Activated CD4-positive, alpha-beta memory T cell treated with anti-CD3 and anti-CD28 coated beads for 36 hours (primary cell): ENCODE measurements at regions of chr3 and their contacts with region 1.

Region 1: GRCh38 chr3:9503283-9503682 is 50.3 kb downstream of the LHFPL4 start:
- DNase-seq: peak; percentile 83
- H3K4me3 Mint-ChIP-seq: no peak overlapping the region
- H3K27ac Mint-ChIP-seq: no peak overlapping the region
- H3K4me1 Mint-ChIP-seq: peaks cover 7% of the 10 kb centered on the region
- H3K27me3 Mint-ChIP-seq: peaks cover 31% of the 10 kb centered on the region

Region 2: DNA sequence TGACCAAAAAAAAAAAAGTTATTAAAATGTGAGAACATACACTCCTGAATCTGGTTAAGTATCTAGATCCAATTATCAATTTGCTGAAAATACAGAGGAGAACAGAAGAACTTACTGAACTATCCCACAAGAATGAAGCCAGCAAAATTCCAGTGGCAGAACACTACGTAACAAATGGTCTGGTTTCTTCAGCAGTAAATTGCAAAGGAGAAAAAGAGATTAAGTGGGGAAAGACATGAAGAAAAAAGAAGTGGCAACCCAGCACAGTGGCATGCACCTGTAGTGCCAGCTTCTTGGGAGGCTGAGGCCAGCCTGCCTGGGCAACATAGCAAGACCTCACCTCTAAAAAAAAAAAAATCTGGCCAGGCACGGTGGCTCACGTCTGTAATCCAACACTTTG is 11.8 kb before region 1 on chr3:
- CTCF ChIA-PET with region 1: interaction called, 15 read pairs
- POLR2A ChIA-PET with region 1: no interaction called
- intact Hi-C with region 1: no loop called
- DNase-seq: no peak
- H3K4me3 Mint-ChIP-seq: no peak overlapping the region
- H3K27ac Mint-ChIP-seq: no peak overlapping the region
- H3K4me1 Mint-ChIP-seq: no peaks in the 10 kb centered on the region
- H3K27me3 Mint-ChIP-seq: no peaks in the 10 kb centered on the region

Region 3: GRCh38 chr3:9649791-9650521 is 146.7 kb after region 1 on chr3:
- CTCF ChIA-PET with region 1: interaction called, 10 read pairs
- POLR2A ChIA-PET with region 1: no interaction called
- intact Hi-C with region 1: loop called (anchors 10 kb)
- DNase-seq: no peak
- H3K4me3 Mint-ChIP-seq: peak overlapping the region; percentile 95
- H3K27ac Mint-ChIP-seq: peak overlapping the region; percentile 73
- H3K4me1 Mint-ChIP-seq: peaks cover 29% of the 10 kb centered on the region
- H3K27me3 Mint-ChIP-seq: no peaks in the 10 kb centered on the region